ENCODE measurements at regions of chr6 and their contacts with region 1.

Region 1: DNA sequence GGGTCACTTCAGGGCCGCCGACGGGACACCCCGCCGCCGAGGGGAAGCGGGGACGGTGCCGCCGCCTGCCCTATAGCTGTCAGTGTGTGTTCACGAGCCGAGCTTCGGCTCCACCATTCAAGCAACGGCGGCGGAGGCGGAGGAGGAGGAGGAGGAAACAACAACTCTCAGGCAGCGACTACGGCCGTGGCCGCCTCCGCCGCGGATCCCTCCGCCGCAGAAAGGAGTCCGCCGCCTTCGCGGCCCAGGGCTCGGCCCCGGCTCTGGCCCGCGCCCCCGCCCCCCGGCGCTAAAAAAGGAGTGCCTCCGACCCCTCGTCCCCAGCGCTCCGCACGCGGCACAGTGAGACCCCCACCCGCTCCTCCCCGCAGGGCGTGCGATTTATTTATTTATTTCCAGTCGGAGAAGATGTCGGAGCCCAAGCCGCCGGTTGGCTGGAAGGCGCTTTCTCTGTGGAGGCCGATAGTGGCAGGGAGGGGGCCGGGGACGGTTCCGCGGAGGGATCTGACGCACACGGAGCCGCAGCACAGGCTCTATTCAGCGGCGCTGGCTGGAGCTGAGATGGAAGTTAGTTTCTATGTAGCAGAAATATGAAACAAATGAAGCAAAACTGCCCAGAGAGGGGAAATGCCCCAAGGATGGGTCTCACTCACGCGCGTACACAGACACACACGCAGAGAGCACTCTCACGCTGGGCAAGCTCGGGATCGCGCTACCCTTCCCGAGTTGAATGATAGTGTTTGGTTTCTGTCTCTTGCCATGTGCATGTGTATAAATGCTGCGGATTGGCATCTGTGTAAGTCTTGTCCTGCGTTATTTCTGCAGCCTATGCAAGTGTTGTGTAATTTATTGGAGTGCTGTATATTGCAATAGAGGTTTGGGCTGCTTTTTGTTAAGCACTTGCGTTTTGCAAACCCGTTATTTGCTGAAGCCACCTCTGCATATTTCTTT is at the start of gene PHIP:
- DNase-seq: peak; percentile 95 to 98 (median 98)
- ATAC-seq: peak; percentile 95 to 96
- H3K4me3 ChIP-seq: peak within 1 kb of the TSS; percentile 99
- H3K27ac ChIP-seq: peak within 1 kb of the TSS; percentile 97
- H3K4me1 ChIP-seq: no peaks in the 10 kb centered on the region
- H3K27me3 ChIP-seq: no peaks in the 10 kb centered on the region
- total RNA-seq, gene PHIP: 17.7 to 19.6 (median 19.2) TPM

Region 2: GRCh38 chr6:78925317-78925716 is 153.0 kb before region 1 on chr6:
- intact Hi-C with region 1: no loop called
- DNase-seq: no peak
- ATAC-seq: no peak
- H3K4me3 ChIP-seq: no peak overlapping the region
- H3K27ac ChIP-seq: no peak overlapping the region
- H3K4me1 ChIP-seq: no peaks in the 10 kb centered on the region
- H3K27me3 ChIP-seq: no peaks in the 10 kb centered on the region

Region 3: GRCh38 chr6:79233611-79234149 is 155.3 kb after region 1 on chr6:
- intact Hi-C with region 1: loop called in 2 of 4 experiments (anchors 5 kb)
- DNase-seq: peak; percentile 95 to 97 (median 96)
- ATAC-seq: peak; percentile 97 to 98
- H3K4me3 ChIP-seq: peak overlapping the region; percentile 72
- H3K27ac ChIP-seq: peak overlapping the region; percentile 88
- H3K4me1 ChIP-seq: no peaks in the 10 kb centered on the region
- H3K27me3 ChIP-seq: no peaks in the 10 kb centered on the region